ENCODE measurements at regions of chr18 and their contacts with region 1.

Region 1: DNA sequence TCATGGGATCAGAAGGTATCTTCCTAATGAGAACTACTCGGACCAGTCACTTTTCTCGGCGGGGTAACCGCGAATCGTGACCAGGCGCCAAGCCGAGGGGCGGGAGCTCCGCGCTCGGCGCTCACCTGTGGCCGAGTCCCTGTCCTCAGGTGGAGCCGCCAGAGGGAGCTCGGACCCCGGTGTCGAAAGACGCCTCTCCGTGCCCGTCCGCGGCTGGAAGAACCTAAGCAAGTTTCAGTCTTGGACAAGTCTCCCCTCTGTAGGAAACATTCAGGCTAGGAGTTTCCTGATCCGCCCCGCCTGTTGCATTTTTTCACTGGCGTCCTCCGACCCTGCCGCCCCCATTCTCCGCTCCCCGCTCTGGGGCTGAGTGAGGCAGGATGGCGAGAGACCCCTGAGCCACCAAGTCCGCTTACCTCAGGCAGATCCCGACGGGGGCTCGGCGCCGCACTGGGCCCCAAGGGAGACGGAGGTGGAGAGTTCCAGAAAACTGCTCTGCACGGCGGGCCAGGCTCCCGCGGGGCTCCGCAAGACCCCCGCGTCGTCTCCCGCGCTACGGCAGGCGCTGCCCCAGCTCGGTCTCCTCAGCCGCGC is 478 bp downstream of the DSEL start:
- DNase-seq: peak; percentile 89
- H3K4me3 ChIP-seq: peak overlapping the region; percentile 62 to 72
- H3K27ac ChIP-seq: peak overlapping the region; percentile 74 to 83
- H3K4me1 ChIP-seq: no peaks in the 10 kb centered on the region
- H3K27me3 ChIP-seq: no peaks in the 10 kb centered on the region
- CTCF ChIP-seq: peak; percentile 45 to 86 (median 75)
- POLR2A ChIP-seq: no peak

Region 2: DNA sequence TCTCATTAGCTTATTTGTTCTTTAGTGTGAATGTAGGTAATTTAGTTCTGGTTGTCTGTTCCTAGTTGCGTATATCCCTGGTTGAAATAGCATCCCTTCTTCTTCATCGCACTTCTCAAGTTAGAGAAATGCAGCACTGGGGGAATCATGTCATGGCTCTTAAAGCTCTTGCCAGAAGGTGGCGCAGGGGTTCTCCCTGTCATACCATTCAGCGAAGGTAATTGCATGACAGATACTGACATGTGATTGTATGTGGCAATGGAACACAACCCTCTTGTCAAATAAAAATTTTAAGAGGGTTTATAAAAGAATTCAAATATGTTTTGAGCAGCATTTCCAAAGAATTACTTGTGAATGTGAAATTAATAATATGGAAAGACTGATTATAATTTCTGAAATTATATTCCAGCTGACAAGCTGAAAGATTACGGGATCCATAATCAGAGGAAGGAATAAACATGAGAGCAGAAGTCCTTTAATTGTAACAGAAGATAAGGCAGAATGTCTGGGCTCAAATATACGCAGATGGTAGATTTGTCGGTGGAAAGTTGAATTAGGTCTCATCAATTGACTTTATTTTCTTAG is 411.2 kb before region 1 on chr18:
- intact Hi-C with region 1: no loop called
- DNase-seq: peak; percentile 58
- H3K4me3 ChIP-seq: no peak overlapping the region
- H3K27ac ChIP-seq: no peak overlapping the region
- H3K4me1 ChIP-seq: no peaks in the 10 kb centered on the region
- H3K27me3 ChIP-seq: no peaks in the 10 kb centered on the region
- CTCF ChIP-seq: peak in 3 of 4 experiments; percentile 14 to 60 (median 54)
- POLR2A ChIP-seq: no peak

Region 3: GRCh38 chr18:67651438-67651837 is 135.4 kb after region 1 on chr18:
- intact Hi-C with region 1: no loop called
- DNase-seq: no peak
- H3K4me3 ChIP-seq: no peak overlapping the region
- H3K27ac ChIP-seq: no peak overlapping the region
- H3K4me1 ChIP-seq: no peaks in the 10 kb centered on the region
- H3K27me3 ChIP-seq: no peaks in the 10 kb centered on the region
- CTCF ChIP-seq: no peak
- POLR2A ChIP-seq: no peak

Region 4: GRCh38 chr18:67893916-67894315 is 377.9 kb after region 1 on chr18:
- intact Hi-C with region 1: no loop called
- DNase-seq: no peak
- H3K4me3 ChIP-seq: no peak overlapping the region
- H3K27ac ChIP-seq: no peak overlapping the region
- H3K4me1 ChIP-seq: no peaks in the 10 kb centered on the region
- H3K27me3 ChIP-seq: no peaks in the 10 kb centered on the region
- CTCF ChIP-seq: no peak
- POLR2A ChIP-seq: no peak

Region 5: DNA sequence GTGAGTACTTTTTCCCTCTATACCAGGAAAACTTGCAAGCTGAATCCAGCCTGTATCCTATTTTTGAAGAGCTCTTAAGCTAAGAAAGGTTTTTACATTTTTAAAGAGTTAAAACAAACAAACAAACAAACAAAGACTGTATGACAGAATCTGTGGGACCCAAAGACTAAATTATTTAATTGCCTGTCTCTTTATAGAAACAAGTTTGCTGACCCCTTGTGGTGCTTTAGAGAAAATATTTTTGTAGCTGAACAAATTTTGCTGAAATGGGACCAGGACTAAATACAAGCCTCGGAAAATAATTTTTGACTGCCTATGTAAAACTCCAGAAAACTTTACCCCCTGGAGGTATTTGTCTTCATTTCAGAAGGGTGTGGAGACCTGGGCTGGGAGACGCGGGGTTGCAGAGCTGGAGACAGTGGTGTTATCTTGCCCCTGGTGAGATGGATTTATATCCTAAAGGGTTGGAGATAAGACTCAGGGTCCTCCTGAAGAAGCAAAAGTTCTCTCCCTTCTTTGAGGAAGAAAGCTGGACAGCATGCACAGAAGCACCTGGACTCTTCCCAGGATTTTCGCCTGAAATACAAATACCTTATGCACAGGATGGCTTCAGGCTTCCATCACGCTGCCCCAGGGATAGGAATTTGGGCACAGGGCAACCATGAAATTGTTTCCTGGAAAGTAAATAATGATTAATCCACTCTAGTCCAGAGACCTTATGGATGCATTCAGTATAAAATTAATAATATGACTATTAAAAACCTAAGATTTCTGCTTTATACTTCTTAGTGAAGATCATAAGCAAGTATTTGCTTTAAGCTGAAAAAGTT is 1144.5 kb after region 1 on chr18:
- intact Hi-C with region 1: loop called (anchors 5 kb)
- DNase-seq: no peak
- H3K4me3 ChIP-seq: no peak overlapping the region
- H3K27ac ChIP-seq: no peak overlapping the region
- H3K4me1 ChIP-seq: no peaks in the 10 kb centered on the region
- H3K27me3 ChIP-seq: no peaks in the 10 kb centered on the region
- CTCF ChIP-seq: peak in 3 of 4 experiments; percentile 49 to 60 (median 51)
- POLR2A ChIP-seq: no peak

Region 6: DNA sequence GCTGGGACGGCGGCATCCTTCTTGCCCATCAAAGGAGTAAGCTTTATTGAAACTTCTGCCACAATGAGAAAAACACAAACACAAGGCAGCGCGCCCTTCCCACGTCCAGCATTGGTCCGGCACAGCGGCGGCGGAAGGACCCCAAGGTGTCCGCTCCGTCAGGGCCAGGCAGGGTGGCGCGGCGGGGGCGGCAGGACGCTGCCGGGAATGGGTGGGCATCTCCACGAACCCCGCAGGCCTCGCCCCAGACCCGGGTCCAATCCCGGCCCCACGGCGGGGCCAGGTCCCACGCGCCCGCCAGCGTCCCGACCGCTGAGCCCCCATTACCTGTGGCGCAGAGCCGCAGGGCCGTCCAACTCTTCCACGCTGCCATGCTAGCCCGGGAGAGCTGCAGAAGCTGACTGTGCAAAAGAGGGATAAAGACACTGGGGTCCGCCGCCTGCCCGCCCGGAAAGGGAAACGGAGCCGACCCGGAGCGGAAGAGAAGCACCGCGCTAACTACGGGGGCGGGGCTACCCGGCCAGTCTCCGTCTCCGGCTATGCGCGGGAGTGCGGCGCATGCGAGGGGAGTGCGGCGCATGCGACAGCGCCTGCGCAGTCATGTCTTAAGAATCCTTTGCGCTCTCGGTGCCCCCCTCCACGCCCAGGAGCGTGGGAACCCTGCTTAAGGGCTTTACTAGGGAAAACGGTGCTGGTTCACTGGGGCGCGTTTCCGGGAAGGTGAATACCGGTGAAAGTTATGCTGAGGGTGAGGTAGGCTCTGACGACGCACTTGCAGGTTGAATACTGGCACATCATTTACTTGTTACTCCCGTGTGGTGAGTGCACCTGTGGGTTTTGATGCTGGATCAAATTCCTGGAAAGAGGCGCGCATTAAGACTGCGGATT is 1198.8 kb after region 1 on chr18 and contains the start of gene TMX3:
- intact Hi-C with region 1: loop called (anchors 10 kb)
- DNase-seq: peak; percentile 83
- H3K4me3 ChIP-seq: peak within 1 kb of the TSS; percentile 69 to 92
- H3K27ac ChIP-seq: peak within 1 kb of the TSS; percentile 56 to 61
- H3K4me1 ChIP-seq: no peaks in the 10 kb centered on the region
- H3K27me3 ChIP-seq: no peaks in the 10 kb centered on the region
- CTCF ChIP-seq: no peak
- POLR2A ChIP-seq: no peak
- total RNA-seq, gene TMX3: 32.3 to 37.1 TPM

Measured in prostate gland (tissue), 2 donors.